Naive thymus-derived CD4-positive, alpha-beta T cell (primary cell): ENCODE measurements at regions of chr3 and their contacts with region 1.

Region 1: DNA sequence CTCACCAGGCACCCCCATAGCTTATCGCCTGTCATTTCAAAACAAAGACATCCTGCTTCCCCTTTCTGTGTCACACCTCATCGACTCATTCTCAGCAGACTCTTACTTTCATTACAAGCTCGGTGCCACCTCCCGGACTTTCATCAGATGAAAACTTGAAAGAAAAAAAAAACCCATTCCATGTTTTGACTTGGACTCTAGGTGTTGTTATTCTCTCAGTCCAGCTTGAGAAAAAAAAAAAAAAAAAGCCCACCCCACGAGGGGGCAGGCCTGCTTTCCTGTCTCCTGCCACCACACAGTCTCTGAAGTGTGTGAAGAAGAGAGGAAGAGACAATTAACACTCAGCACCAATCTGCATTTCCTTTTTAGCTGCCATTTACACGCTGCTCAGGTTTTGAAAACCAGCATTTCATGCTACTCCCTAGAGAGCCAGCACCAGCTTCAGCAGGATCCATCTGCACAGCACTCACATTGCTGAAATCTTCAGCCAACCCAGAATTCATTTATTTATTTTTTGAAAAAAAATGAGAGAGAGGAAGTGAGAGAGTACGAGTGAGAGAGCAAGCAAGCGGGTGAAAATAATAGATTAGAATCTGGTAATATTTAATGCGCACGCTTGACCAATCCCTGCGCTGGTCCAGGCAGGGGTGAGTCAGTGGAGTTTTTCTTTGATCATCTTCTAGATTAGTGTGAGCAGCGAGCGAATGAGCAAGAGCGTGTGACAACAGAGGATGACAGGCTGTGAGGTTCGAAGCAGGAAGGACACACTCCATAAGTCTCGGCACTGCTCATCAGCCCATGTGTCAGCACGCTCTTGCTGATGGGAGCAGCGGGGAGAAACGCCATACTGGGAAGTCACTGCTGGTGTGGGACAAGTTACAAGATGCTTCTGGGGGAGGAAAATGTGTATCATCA is 23.5 kb downstream of the ZNF80 start:
- DNase-seq: peak; percentile 33 to 83 (median 71)
- ATAC-seq: peak; percentile 61
- H3K4me3 ChIP-seq: peak overlapping the region; percentile 50
- H3K4me3 Mint-ChIP-seq: no peak overlapping the region
- H3K27ac ChIP-seq: peak overlapping the region; percentile 90
- H3K27ac Mint-ChIP-seq: no peak overlapping the region
- H3K4me1 ChIP-seq: peaks cover 43 to 65% of the 10 kb centered on the region in 2 donors
- H3K4me1 Mint-ChIP-seq: peaks cover 0 to 26% (median 3%) of the 10 kb centered on the region in 7 donors
- H3K27me3 ChIP-seq: no peaks in the 10 kb centered on the region
- H3K27me3 Mint-ChIP-seq: no peaks in the 10 kb centered on the region

Region 2: DNA sequence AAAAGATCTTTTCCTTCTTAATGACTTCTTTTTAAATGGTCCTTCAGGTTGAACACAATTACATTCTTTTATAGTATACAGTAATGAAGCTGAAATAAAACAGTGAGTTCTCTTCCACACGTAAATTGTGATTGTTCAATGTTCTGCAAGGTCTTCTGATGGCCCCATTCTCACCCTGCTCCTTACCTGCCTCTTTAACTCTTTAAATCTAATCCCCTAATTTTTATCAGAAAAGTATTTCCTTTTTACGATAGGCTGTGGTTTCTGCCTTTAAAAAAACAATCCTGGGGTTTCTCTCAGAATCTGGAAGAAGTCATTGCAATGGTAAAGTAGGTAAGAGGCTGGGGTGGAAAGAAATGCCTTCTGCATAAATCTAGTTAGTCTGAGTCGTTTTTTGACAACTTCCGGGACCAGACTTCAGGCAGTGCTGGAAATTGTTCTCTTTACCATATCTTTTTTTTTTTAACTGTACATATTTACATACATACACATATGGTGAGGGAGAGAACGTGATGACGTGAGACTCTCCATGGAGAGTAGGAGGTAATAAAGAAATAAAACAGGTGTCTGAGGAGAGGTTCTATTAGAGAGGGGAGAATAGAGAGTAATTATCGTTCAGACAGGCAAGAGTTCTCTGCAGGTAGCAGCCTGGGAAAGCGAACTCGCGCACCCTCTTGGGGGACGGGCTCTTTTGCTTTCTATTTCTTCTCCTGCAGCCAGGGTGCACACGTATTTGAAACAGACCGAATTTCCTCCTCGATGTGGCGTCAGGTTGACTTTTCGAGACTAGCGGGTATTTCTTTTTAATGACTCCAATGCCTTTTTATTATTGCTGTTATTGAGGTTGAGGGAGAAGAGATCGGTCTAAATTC is 681.8 kb before region 1 on chr3 and contains the start of gene SIDT1:
- CTCF ChIA-PET with region 1: no interaction called
- POLR2A ChIA-PET with region 1: interaction called, 3 read pairs
- intact Hi-C with region 1: loop called (anchors 10 kb)
- DNase-seq: peak; percentile 31 to 87 (median 78)
- ATAC-seq: peak; percentile 87
- H3K4me3 ChIP-seq: peak within 1 kb of the TSS; percentile 96
- H3K4me3 Mint-ChIP-seq: peak within 1 kb of the TSS; percentile 92 to 100 (median 98)
- H3K27ac ChIP-seq: peak within 1 kb of the TSS; percentile 95
- H3K27ac Mint-ChIP-seq: peak within 1 kb of the TSS; percentile 97 to 100 (median 99)
- H3K4me1 ChIP-seq: peaks cover 28 to 40% of the 10 kb centered on the region in 2 donors
- H3K4me1 Mint-ChIP-seq: peaks cover 33 to 69% (median 57%) of the 10 kb centered on the region in 7 donors
- H3K27me3 ChIP-seq: no peaks in the 10 kb centered on the region
- H3K27me3 Mint-ChIP-seq: peaks cover 0 to 16% (median 0%) of the 10 kb centered on the region in 5 donors
- total RNA-seq, gene SIDT1: 32.1 to 65.7 (median 60.7) TPM

Region 3: GRCh38 chr3:114152519-114153151 is 61.2 kb before region 1 on chr3:
- CTCF ChIA-PET with region 1: interaction called, 8 read pairs
- POLR2A ChIA-PET with region 1: interaction called, 5 read pairs
- intact Hi-C with region 1: loop called (anchors 1 to 2 kb)
- DNase-seq: peak; percentile 61 to 83 (median 78)
- ATAC-seq: peak; percentile 97
- H3K4me3 ChIP-seq: peak overlapping the region; percentile 55
- H3K4me3 Mint-ChIP-seq: peak overlapping the region; percentile 37 to 73 (median 62)
- H3K27ac ChIP-seq: no peak overlapping the region
- H3K27ac Mint-ChIP-seq: peak overlapping the region in 2 of 9 donors; percentile 14 to 40
- H3K4me1 ChIP-seq: peaks cover 8 to 9% of the 10 kb centered on the region in 2 donors
- H3K4me1 Mint-ChIP-seq: peaks cover 0 to 12% (median 0%) of the 10 kb centered on the region in 7 donors
- H3K27me3 ChIP-seq: no peaks in the 10 kb centered on the region
- H3K27me3 Mint-ChIP-seq: no peaks in the 10 kb centered on the region

Region 4: DNA sequence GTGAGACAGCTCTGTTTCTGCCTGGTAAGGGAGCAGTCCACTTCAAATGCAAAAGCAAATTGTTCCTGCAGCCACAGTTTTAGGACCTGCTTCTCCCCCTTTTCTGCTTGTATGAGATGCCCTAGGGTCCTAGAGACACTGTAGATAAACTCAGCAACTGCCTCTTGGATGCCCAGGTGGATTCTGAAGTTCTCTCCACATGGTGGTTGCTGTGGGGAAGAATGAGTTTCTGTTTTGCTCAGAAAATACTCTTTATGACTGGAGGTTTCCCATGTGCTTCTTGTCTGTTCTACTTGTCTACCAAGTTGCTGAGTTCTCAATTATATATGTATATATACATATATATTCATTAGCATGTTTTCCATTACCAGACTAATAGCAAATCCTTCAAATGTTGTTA is 29.1 kb after region 1 on chr3:
- CTCF ChIA-PET with region 1: interaction called, 6 read pairs
- POLR2A ChIA-PET with region 1: interaction called, 6 read pairs
- intact Hi-C with region 1: loop called (anchors 2 to 5 kb)
- DNase-seq: no peak
- ATAC-seq: no peak
- H3K4me3 ChIP-seq: no peak overlapping the region
- H3K4me3 Mint-ChIP-seq: peak overlapping the region in 1 of 10 donors; percentile 10
- H3K27ac ChIP-seq: no peak overlapping the region
- H3K27ac Mint-ChIP-seq: peak overlapping the region in 2 of 9 donors; percentile 55 to 69
- H3K4me1 ChIP-seq: no peaks in the 10 kb centered on the region
- H3K4me1 Mint-ChIP-seq: peaks cover 0 to 19% (median 2%) of the 10 kb centered on the region in 7 donors
- H3K27me3 ChIP-seq: no peaks in the 10 kb centered on the region
- H3K27me3 Mint-ChIP-seq: no peaks in the 10 kb centered on the region

Region 5: DNA sequence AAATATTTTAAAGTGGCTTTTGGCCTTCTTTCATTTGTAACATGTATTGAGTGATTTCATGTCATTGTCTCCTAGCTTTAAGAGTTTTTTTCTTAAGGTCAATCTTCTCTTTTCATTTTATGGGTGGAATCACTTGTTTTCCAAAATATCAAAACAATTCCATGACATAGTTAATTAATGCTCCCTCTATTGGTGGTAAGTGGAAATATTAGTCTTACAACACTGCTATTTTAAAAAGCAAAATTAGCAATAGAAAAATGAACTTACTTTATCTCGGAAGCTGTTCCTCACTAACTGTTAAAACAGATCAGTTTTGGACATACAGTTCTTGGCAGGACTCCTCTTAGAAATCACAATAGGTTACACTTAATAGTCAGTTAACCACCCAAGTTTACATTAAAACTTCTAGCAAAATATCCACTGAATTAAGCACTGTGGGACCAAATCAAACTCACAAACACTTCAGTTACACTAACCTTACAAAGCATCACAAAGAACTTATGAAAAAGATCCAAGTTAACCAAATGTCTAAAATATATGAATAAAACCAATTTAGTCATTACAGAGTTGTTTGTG is 122.3 kb after region 1 on chr3:
- CTCF ChIA-PET with region 1: interaction called, 3 read pairs
- POLR2A ChIA-PET with region 1: interaction called, 4 read pairs
- intact Hi-C with region 1: loop called (anchors 1 kb)
- DNase-seq: peak in 2 of 9 donors; percentile 2 to 4
- ATAC-seq: no peak
- H3K4me3 ChIP-seq: no peak overlapping the region
- H3K4me3 Mint-ChIP-seq: no peak overlapping the region
- H3K27ac ChIP-seq: no peak overlapping the region
- H3K27ac Mint-ChIP-seq: peak overlapping the region in 1 of 9 donors; percentile 9
- H3K4me1 ChIP-seq: peaks cover 0 to 38% of the 10 kb centered on the region in 2 donors
- H3K4me1 Mint-ChIP-seq: peaks cover 0 to 25% (median 4%) of the 10 kb centered on the region in 7 donors
- H3K27me3 ChIP-seq: no peaks in the 10 kb centered on the region
- H3K27me3 Mint-ChIP-seq: no peaks in the 10 kb centered on the region

Region 6: DNA sequence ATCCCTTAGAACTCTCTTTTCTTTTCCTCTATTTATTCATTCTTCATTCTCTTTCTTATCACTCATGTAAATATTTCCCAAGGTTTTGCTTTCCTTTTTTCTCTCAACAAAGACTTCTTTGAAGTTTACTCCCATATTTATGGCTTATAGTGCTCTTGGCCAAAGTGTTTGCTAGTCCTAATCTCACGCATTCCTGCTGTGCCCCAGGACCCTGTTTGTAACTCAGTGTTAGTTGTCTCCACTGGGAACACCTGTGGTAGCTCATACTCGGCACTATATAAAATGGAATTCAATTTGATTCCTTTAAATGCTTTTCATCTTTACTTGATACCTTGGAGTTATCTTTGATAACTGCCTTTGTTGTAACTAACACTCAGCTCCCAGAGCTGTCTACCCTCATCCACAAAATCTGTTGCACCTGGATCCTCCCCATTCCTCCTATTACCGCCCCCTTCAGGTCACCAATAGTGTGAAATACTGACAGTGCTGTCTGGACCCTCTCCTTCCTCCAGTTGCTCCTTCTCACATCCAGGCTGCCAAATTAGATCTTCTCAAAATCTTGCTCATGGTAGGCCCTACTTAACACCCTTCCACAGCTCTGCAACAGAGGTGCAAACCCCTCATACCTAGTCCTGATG is 156.8 kb after region 1 on chr3:
- CTCF ChIA-PET with region 1: no interaction called
- POLR2A ChIA-PET with region 1: no interaction called
- intact Hi-C with region 1: no loop called
- DNase-seq: no peak
- ATAC-seq: no peak
- H3K4me3 ChIP-seq: no peak overlapping the region
- H3K4me3 Mint-ChIP-seq: no peak overlapping the region
- H3K27ac ChIP-seq: no peak overlapping the region
- H3K27ac Mint-ChIP-seq: no peak overlapping the region
- H3K4me1 ChIP-seq: no peaks in the 10 kb centered on the region
- H3K4me1 Mint-ChIP-seq: peaks cover 0 to 3% (median 0%) of the 10 kb centered on the region in 7 donors
- H3K27me3 ChIP-seq: no peaks in the 10 kb centered on the region
- H3K27me3 Mint-ChIP-seq: no peaks in the 10 kb centered on the region

Region 7: DNA sequence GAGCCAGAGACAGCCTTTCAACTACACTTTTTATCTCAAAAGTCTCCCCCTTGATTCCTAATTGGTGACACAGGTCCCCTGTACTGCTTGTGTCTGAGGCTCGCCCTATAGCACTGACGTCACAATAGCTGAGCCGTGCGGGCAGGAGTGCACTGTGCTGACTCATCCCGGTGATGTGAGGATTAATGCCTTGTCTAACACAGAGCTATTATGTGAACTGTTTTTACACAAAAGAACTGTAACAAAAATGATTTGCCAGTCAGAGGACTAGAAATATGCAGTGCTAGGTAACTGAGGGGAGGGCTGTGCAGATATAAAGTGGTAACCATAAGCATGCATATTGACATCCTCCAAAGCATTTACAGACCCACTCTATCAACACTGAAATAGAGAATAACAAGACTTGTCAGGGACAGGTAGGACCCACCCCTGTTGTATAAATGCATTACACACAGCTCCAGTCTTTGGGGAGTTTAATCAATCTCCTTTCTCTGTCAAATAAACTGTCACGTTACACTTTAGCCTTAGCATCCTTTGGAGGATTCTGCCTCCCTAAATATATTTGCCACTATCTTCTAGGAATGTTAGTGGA is 285.0 kb after region 1 on chr3:
- CTCF ChIA-PET with region 1: no interaction called
- POLR2A ChIA-PET with region 1: no interaction called
- intact Hi-C with region 1: no loop called
- DNase-seq: no peak
- ATAC-seq: no peak
- H3K4me3 ChIP-seq: no peak overlapping the region
- H3K4me3 Mint-ChIP-seq: no peak overlapping the region
- H3K27ac ChIP-seq: no peak overlapping the region
- H3K27ac Mint-ChIP-seq: no peak overlapping the region
- H3K4me1 ChIP-seq: peaks cover 9 to 13% of the 10 kb centered on the region in 2 donors
- H3K4me1 Mint-ChIP-seq: peaks cover 17 to 69% (median 40%) of the 10 kb centered on the region in 7 donors
- H3K27me3 ChIP-seq: no peaks in the 10 kb centered on the region
- H3K27me3 Mint-ChIP-seq: peaks cover 0 to 32% (median 0%) of the 10 kb centered on the region in 5 donors

Region 8: GRCh38 chr3:115783938-115784738 is 1570.3 kb after region 1 on chr3:
- CTCF ChIA-PET with region 1: no interaction called
- POLR2A ChIA-PET with region 1: no interaction called
- intact Hi-C with region 1: loop called (anchors 5 to 10 kb)
- DNase-seq: peak; percentile 88 to 94 (median 92)
- ATAC-seq: peak; percentile 92
- H3K4me3 ChIP-seq: peak overlapping the region; percentile 54
- H3K4me3 Mint-ChIP-seq: peak overlapping the region; percentile 80 to 97 (median 91)
- H3K27ac ChIP-seq: peak overlapping the region; percentile 99
- H3K27ac Mint-ChIP-seq: peak overlapping the region; percentile 79 to 99 (median 98)
- H3K4me1 ChIP-seq: peaks cover 3% of the 10 kb centered on the region in 2 donors
- H3K4me1 Mint-ChIP-seq: peaks cover 8 to 16% (median 14%) of the 10 kb centered on the region in 7 donors
- H3K27me3 ChIP-seq: no peaks in the 10 kb centered on the region
- H3K27me3 Mint-ChIP-seq: peaks cover 0 to 25% (median under 1%) of the 10 kb centered on the region in 5 donors